H1 (cell line): ENCODE measurements at regions of chr6 and their contacts with region 1.

Region 1: GRCh38 chr6:34067814-34068213 is 78.1 kb downstream of the GRM4 start:
- DNase-seq: no peak
- H3K4me3 ChIP-seq: no peak overlapping the region
- H3K27ac ChIP-seq: no peak overlapping the region
- H3K4me1 ChIP-seq: peaks cover 0 to 14% (median 7%) of the 10 kb centered on the region in 4 experiments; a peak in 6 of 7 replicates
- H3K27me3 ChIP-seq: no peaks in the 10 kb centered on the region
- CTCF ChIP-seq: peak in 2 of 3 experiments; percentile 48 to 50; a peak in 3 of 4 replicates
- EP300 ChIP-seq: no peak
- POLR2A ChIP-seq: no peak
- RAD21 ChIP-seq: peak; percentile 31 to 56

Region 2: GRCh38 chr6:33827546-33828451 is 240.0 kb before region 1 on chr6:
- CTCF ChIA-PET with region 1: no interaction called
- POLR2A ChIA-PET with region 1: no interaction called
- DNase-seq: no peak
- H3K4me3 ChIP-seq: no peak overlapping the region
- H3K27ac ChIP-seq: no peak overlapping the region
- H3K4me1 ChIP-seq: peaks cover 0 to 24% (median 12%) of the 10 kb centered on the region in 4 experiments; a peak in 6 of 7 replicates
- H3K27me3 ChIP-seq: no peaks in the 10 kb centered on the region
- CTCF ChIP-seq: no peak
- EP300 ChIP-seq: no peak
- POLR2A ChIP-seq: no peak
- RAD21 ChIP-seq: no peak

Region 3: DNA sequence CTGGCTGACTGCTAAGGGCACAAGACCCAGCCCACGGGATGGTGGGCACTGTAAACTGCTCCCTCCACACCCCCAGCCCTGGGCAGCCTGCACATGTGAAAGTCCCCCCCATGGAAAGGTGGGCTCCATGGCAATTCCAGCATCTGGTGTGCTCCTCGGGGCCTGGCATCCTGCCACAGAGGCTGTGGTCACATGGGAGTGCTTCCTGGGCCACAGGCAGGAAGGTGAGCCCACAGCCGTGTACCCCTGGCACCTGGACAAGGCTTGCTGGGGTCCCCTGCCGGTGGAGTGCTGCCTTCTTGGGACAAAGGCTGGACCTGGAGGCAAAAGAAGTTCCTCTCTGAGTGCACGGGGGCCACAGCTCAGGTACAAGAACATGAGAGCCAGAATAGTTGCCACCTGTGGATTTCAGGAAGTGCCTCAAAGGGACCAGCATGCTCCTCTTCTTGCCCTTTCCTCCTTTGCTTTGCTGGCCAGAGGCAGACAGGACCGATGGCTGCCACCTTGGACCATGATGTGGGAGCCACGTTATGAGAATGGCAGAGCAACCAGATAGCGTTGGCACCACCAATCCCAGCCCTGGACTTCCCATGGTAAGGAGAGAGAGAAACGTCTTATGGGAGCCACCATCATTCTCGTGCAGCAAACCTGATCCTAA is 143.8 kb before region 1 on chr6:
- CTCF ChIA-PET with region 1: no interaction called
- POLR2A ChIA-PET with region 1: no interaction called
- DNase-seq: no peak
- H3K4me3 ChIP-seq: no peak overlapping the region
- H3K27ac ChIP-seq: no peak overlapping the region
- H3K4me1 ChIP-seq: peaks cover 0 to 14% (median 6%) of the 10 kb centered on the region in 4 experiments; a peak in 3 of 7 replicates
- H3K27me3 ChIP-seq: peaks cover 0 to 3% (median 0%) of the 10 kb centered on the region in 4 experiments; a peak in 2 of 7 replicates
- CTCF ChIP-seq: no peak
- EP300 ChIP-seq: no peak
- POLR2A ChIP-seq: no peak
- RAD21 ChIP-seq: no peak

Region 4: GRCh38 chr6:34001706-34002621 is 65.8 kb before region 1 on chr6:
- CTCF ChIA-PET with region 1: interaction called, 10 read pairs
- POLR2A ChIA-PET with region 1: no interaction called
- DNase-seq: no peak
- H3K4me3 ChIP-seq: no peak overlapping the region
- H3K27ac ChIP-seq: no peak overlapping the region
- H3K4me1 ChIP-seq: peaks cover 6 to 9% (median 8%) of the 10 kb centered on the region in 4 experiments
- H3K27me3 ChIP-seq: peaks cover 14 to 45% (median 40%) of the 10 kb centered on the region in 4 experiments
- CTCF ChIP-seq: no peak
- EP300 ChIP-seq: no peak
- POLR2A ChIP-seq: no peak
- RAD21 ChIP-seq: no peak

Region 5: GRCh38 chr6:34044945-34045595 is 22.7 kb before region 1 on chr6:
- CTCF ChIA-PET with region 1: interaction called, 16 read pairs
- POLR2A ChIA-PET with region 1: no interaction called
- DNase-seq: no peak
- H3K4me3 ChIP-seq: no peak overlapping the region
- H3K27ac ChIP-seq: no peak overlapping the region
- H3K4me1 ChIP-seq: peaks cover 0 to 13% (median 8%) of the 10 kb centered on the region in 4 experiments; a peak in 6 of 7 replicates
- H3K27me3 ChIP-seq: no peaks in the 10 kb centered on the region
- CTCF ChIP-seq: no peak
- EP300 ChIP-seq: no peak
- POLR2A ChIP-seq: no peak
- RAD21 ChIP-seq: no peak

Region 6: GRCh38 chr6:34082864-34083626 is 15.2 kb after region 1 on chr6:
- CTCF ChIA-PET with region 1: interaction called, 11 read pairs
- POLR2A ChIA-PET with region 1: no interaction called
- DNase-seq: no peak
- H3K4me3 ChIP-seq: no peak overlapping the region
- H3K27ac ChIP-seq: no peak overlapping the region
- H3K4me1 ChIP-seq: peaks cover 0 to 10% (median 2%) of the 10 kb centered on the region in 4 experiments; a peak in 3 of 7 replicates
- H3K27me3 ChIP-seq: no peaks in the 10 kb centered on the region
- CTCF ChIP-seq: no peak
- EP300 ChIP-seq: no peak
- POLR2A ChIP-seq: no peak
- RAD21 ChIP-seq: no peak

Region 7: GRCh38 chr6:34132486-34133185 is 64.8 kb after region 1 on chr6:
- CTCF ChIA-PET with region 1: interaction called, 14 read pairs
- POLR2A ChIA-PET with region 1: no interaction called
- DNase-seq: peak in 1 of 2 experiments; percentile 91
- H3K4me3 ChIP-seq: peak overlapping the region in 3 of 4 experiments; percentile 10 to 50 (median 21); a peak in 6 of 8 replicates
- H3K27ac ChIP-seq: no peak overlapping the region
- H3K4me1 ChIP-seq: peaks cover 18 to 51% (median 39%) of the 10 kb centered on the region in 4 experiments
- H3K27me3 ChIP-seq: no peaks in the 10 kb centered on the region
- CTCF ChIP-seq: no peak
- EP300 ChIP-seq: no peak
- POLR2A ChIP-seq: no peak
- RAD21 ChIP-seq: peak; percentile 13 to 18; a peak in 2 of 4 replicates

Region 8: GRCh38 chr6:34145161-34146020 is 77.6 kb after region 1 on chr6:
- CTCF ChIA-PET with region 1: interaction called, 20 read pairs
- POLR2A ChIA-PET with region 1: interaction called, 3 read pairs
- DNase-seq: peak in 1 of 2 experiments; percentile 80
- H3K4me3 ChIP-seq: peak overlapping the region; percentile 51 to 77 (median 64)
- H3K27ac ChIP-seq: no peak overlapping the region
- H3K4me1 ChIP-seq: peaks cover 12 to 57% (median 47%) of the 10 kb centered on the region in 4 experiments
- H3K27me3 ChIP-seq: peaks cover 0 to 46% (median 31%) of the 10 kb centered on the region in 4 experiments; a peak in 6 of 7 replicates
- CTCF ChIP-seq: no peak
- EP300 ChIP-seq: no peak
- POLR2A ChIP-seq: no peak
- RAD21 ChIP-seq: no peak; a peak in 1 of 4 replicates

Region 9: GRCh38 chr6:34350137-34350933 is 282.5 kb after region 1 on chr6:
- CTCF ChIA-PET with region 1: no interaction called
- POLR2A ChIA-PET with region 1: no interaction called
- DNase-seq: no peak
- H3K4me3 ChIP-seq: no peak overlapping the region
- H3K27ac ChIP-seq: no peak overlapping the region
- H3K4me1 ChIP-seq: no peaks in the 10 kb centered on the region
- H3K27me3 ChIP-seq: no peaks in the 10 kb centered on the region
- CTCF ChIP-seq: no peak
- EP300 ChIP-seq: no peak
- POLR2A ChIP-seq: no peak
- RAD21 ChIP-seq: no peak